ENCODE measurements at regions of chr19 and their contacts with region 1.

Region 1: GRCh38 chr19:53844849-53845246 is 20.7 kb upstream of the NLRP12 start:
- DNase-seq: no peak
- ATAC-seq: peak; percentile 69
- H3K4me3 ChIP-seq: no peak overlapping the region
- H3K27ac ChIP-seq: no peak overlapping the region
- H3K4me1 ChIP-seq: peaks cover 13% of the 10 kb centered on the region
- H3K27me3 ChIP-seq: no peaks in the 10 kb centered on the region
- CTCF ChIP-seq: no peak

Region 2: DNA sequence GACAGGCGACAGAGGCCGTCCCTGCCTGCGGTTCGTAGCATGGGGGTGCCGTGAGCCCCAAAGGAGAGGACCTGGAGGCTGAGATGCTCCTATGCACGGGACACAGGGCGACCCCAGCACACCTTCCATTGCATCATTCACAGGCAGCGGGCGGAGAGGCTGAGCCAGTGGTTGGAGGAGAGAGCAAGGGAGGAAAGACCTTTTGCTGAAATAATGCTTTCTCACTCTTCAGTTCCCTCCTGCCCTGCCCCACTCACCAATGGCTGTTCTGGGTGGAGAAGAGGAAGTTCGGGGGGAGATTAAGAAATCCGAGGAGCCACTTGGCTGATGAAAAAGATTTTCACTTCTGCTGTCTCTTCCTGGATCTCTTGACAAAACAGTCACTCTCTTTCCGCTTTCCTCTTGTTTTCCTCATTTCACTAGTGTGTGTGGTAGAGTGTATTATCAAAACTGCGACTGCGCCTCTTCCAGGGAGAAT is 20.7 kb before region 1 on chr19 and contains the start of gene NLRP12:
- intact Hi-C with region 1: no loop called
- DNase-seq: peak; percentile 68
- ATAC-seq: peak; percentile 93
- H3K4me3 ChIP-seq: peak within 1 kb of the TSS; percentile 17
- H3K27ac ChIP-seq: peak within 1 kb of the TSS; percentile 51
- H3K4me1 ChIP-seq: no peaks in the 10 kb centered on the region
- H3K27me3 ChIP-seq: no peaks in the 10 kb centered on the region
- CTCF ChIP-seq: no peak
- total RNA-seq, gene NLRP12: 4.0 TPM

Region 3: DNA sequence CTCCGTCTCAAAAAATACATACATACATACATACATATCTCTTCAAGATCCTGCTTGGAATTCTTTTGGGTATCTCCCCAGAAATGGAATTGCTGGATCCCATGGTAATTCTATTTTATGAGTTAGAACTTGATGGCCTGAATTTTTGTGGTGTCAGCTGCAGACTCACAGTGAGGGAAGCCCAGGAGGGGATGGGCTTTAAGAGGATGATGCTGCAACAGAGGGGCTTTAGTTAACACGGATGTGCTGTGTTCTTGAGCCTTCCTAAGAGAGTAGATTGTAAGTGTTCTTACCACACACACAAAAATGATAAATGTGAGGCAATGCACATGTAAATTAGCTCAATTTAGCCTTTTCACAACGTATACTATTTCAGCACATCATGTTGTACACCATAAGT is 178.3 kb after region 1 on chr19:
- intact Hi-C with region 1: loop called (anchors 5 kb)
- DNase-seq: no peak
- ATAC-seq: no peak
- H3K4me3 ChIP-seq: no peak overlapping the region
- H3K27ac ChIP-seq: no peak overlapping the region
- H3K4me1 ChIP-seq: no peaks in the 10 kb centered on the region
- H3K27me3 ChIP-seq: peaks cover 15% of the 10 kb centered on the region
- CTCF ChIP-seq: no peak